Activated T-helper 1 cell treated with anti-CD3 and anti-CD28 coated beads, Interleukin-12 subunit alpha, Interleukin-12 subunit beta, Interleukin-2, Interleukin-4 antibody, amounts not matched to agents 30 ng/mL and 10 ng/mL and 1 ng/mL, durations not matched to agents 14 hours and 24 hours and 36 hours (primary cell): ENCODE measurements at regions of chr16 and their contacts with region 1.

Region 1: GRCh38 chr16:58000706-58001676 is at the start of gene USB1:
- DNase-seq: peak; percentile 83
- H3K4me3 Mint-ChIP-seq: peak within 1 kb of the TSS; percentile 91
- H3K27ac Mint-ChIP-seq: peak within 1 kb of the TSS; percentile 91
- H3K4me1 Mint-ChIP-seq: peaks cover 45% of the 10 kb centered on the region
- H3K27me3 Mint-ChIP-seq: no peaks in the 10 kb centered on the region
- total RNA-seq, gene USB1: 60.8 and 63.0 TPM in 2 replicates

Region 2: DNA sequence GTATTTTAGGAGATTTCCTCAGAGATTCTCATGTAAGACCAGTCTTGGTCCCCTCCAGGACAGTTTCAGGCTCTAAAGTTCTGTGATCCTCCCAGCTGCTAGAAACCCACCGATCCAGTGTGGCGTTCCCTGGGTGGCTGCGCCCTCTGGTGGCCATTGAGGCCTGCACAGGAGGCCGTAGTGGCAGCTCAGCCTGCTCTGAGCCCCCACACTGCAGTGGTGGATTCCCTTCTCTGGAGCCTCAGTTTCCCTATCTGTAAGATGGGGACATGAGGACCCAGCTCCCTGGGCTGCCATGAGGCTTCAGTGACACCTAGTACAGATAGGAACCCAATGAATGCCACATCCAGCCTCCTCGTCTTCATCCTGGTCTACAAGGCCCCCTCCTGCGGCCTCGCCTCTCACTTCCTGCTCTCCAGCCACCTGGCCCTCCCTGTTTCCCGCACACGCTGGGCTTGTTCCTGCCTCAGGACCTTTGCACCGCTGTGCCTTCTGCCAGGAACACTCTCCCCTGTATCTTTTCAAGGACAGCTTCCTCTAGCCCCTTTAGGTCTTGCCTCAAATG is 481.1 kb before region 1 on chr16:
- intact Hi-C with region 1: loop called (anchors 1 kb)
- DNase-seq: peak; percentile 69
- H3K4me3 Mint-ChIP-seq: no peak overlapping the region
- H3K27ac Mint-ChIP-seq: peak overlapping the region; percentile 65
- H3K4me1 Mint-ChIP-seq: peaks cover 21% of the 10 kb centered on the region
- H3K27me3 Mint-ChIP-seq: no peaks in the 10 kb centered on the region

Region 3: DNA sequence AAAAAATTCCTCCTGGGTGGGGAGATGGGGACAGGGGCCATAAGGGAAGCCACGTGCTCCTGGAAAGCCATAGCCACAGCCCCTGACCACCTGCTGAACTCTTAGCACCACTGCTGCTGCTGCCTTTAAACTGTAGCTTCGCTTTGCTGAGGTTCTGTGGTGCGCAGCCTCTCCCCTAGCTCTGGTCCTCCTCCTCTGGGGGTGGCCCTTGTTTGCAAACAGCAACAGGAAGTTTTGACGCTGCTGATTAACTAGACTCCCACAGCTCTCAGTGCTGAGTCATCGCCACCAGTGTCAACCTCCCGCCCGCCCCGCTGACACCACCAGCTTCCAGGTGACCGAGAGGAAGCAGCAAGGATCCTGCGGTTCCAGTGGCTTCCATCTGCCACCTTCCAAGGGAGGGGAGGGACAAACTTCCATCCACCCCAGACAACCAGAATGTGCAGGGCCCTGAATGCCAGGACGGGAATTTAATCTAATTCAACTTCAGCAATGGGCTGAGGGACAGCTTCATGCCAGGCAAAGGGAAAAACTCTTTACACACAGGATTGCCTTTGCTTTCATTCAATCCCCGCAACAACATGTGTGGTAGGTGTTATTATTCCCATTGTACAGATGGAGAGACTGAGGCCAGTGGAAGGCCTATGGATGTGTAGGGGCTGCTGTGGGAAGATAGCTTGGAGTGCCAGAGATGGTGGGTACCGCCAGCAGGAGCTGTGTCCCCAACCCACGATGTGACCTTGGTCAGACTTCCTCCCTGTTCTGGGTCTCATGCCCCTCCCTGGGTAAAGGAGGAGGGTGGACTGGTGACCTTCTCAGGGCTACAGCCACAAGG is 190.6 kb before region 1 on chr16:
- intact Hi-C with region 1: loop called (anchors 1 kb)
- DNase-seq: peak; percentile 80
- H3K4me3 Mint-ChIP-seq: peak overlapping the region; percentile 61
- H3K27ac Mint-ChIP-seq: peak overlapping the region; percentile 83
- H3K4me1 Mint-ChIP-seq: peaks cover 36% of the 10 kb centered on the region
- H3K27me3 Mint-ChIP-seq: peaks cover 18% of the 10 kb centered on the region

Region 4: DNA sequence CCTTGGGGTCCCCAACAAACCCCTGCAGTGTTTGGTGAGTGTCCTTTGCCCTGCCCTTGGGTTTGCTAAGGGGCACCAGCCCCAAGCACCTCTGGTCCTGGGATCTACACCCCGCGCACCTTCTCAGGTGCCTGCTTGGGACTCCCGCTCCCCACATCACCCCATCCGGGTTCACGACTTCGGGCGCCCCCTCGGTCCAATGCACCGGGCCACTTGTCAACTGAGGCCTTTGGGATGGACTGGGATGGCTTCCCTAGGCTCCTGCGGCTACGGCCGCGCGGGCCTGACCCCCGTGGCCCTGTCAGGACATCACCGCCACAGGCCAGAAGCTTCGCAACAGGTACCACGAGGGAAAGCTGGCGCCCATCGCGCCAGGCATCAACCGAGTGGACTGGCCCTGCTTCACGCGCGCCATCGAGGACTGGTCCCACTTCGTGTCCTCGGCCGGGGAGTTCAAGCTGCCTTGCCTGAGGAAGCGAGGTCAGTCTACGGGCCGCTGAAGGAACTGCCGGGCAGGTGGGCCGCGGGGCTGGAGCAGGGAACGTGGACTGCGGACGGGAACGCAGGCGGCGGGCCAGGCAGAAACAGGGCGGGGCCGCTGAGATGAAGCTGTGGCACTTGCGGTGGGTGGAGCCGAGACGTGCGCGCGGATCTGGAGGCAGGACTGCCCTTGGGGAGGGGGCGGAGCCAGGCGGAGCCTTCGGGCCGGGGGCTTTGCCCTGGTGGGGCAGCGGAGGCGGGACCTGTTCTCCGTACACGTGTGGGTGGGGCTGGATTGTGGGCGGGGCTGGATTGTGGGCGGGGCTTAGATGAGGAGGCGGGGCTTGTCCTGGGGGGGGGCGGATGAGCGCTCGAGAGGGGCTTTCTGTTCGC is 16.4 kb before region 1 on chr16:
- intact Hi-C with region 1: loop called (anchors 1 kb)
- DNase-seq: peak; percentile 89
- H3K4me3 Mint-ChIP-seq: peak overlapping the region; percentile 85
- H3K27ac Mint-ChIP-seq: no peak overlapping the region
- H3K4me1 Mint-ChIP-seq: no peaks in the 10 kb centered on the region
- H3K27me3 Mint-ChIP-seq: peaks cover 11% of the 10 kb centered on the region

Region 5: GRCh38 chr16:58086426-58087208 is 85.6 kb after region 1 on chr16:
- intact Hi-C with region 1: no loop called
- DNase-seq: no peak
- H3K4me3 Mint-ChIP-seq: no peak overlapping the region
- H3K27ac Mint-ChIP-seq: no peak overlapping the region
- H3K4me1 Mint-ChIP-seq: no peaks in the 10 kb centered on the region
- H3K27me3 Mint-ChIP-seq: no peaks in the 10 kb centered on the region

Region 6: GRCh38 chr16:58392215-58393137 is 391.5 kb after region 1 on chr16 and contains the start of gene GINS3:
- intact Hi-C with region 1: loop called (anchors 2 kb)
- DNase-seq: peak; percentile 82
- H3K4me3 Mint-ChIP-seq: peak within 1 kb of the TSS; percentile 95
- H3K27ac Mint-ChIP-seq: peak within 1 kb of the TSS; percentile 95
- H3K4me1 Mint-ChIP-seq: peaks cover 21% of the 10 kb centered on the region
- H3K27me3 Mint-ChIP-seq: peaks cover 11% of the 10 kb centered on the region
- total RNA-seq, gene GINS3: 23.8 and 25.3 TPM in 2 replicates